ENCODE measurements at regions of chr6 and their contacts with region 1.

Region 1: DNA sequence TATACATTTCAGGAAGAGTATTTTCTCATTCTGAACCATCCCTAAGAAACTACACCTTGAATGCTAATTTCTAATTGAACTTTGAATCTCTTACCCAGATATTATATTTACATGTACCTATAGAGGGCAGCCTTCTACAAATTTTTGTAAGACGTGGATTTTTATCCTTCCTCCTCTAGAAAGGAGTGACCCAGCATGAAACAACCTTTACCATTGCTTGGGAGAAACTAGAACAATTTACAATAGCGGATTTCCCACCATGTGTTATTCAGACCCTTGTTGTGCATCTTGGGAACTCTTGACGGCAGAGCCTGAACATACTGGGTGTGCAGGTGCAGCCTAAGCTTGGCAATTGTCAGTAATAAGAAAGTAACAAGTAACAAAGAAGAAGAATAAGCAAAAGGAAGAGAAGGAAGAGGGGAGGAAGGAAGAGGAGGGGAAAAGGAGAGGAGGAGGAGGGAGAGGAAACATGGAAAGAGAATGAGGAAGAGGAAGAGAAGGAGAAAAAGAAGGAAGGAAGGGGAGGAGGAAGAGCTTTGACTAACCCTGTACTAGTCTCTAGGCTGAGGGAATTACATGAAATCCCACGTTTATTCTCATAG is 10.8 kb upstream of the TAAR1 start:
- DNase-seq: peak; percentile 61
- ATAC-seq: peak; percentile 60
- H3K4me3 ChIP-seq: no peak overlapping the region
- H3K4me3 Mint-ChIP-seq: peak overlapping the region; percentile 44
- H3K27ac ChIP-seq: no peak overlapping the region
- H3K27ac Mint-ChIP-seq: peak overlapping the region; percentile 0
- H3K4me1 ChIP-seq: peaks cover 4 to 5% of the 10 kb centered on the region in 2 donors
- H3K4me1 Mint-ChIP-seq: peaks cover 6% of the 10 kb centered on the region
- H3K27me3 ChIP-seq: no peaks in the 10 kb centered on the region
- H3K27me3 Mint-ChIP-seq: no peaks in the 10 kb centered on the region
- CTCF ChIP-seq: peak; percentile 79

Region 2: GRCh38 chr6:132768051-132768517 is 98.3 kb after region 1 on chr6:
- CTCF ChIA-PET with region 1: interaction called, 144 read pairs
- POLR2A ChIA-PET with region 1: no interaction called
- intact Hi-C with region 1: loop called (anchors 1 kb)
- DNase-seq: peak; percentile 60
- ATAC-seq: peak; percentile 79
- H3K4me3 ChIP-seq: no peak overlapping the region
- H3K4me3 Mint-ChIP-seq: peak overlapping the region; percentile 27
- H3K27ac ChIP-seq: no peak overlapping the region
- H3K27ac Mint-ChIP-seq: peak overlapping the region; percentile 38
- H3K4me1 ChIP-seq: peaks cover 7 to 14% of the 10 kb centered on the region in 2 donors
- H3K4me1 Mint-ChIP-seq: peaks cover 22% of the 10 kb centered on the region
- H3K27me3 ChIP-seq: no peaks in the 10 kb centered on the region
- H3K27me3 Mint-ChIP-seq: no peaks in the 10 kb centered on the region
- CTCF ChIP-seq: peak; percentile 63

Region 3: DNA sequence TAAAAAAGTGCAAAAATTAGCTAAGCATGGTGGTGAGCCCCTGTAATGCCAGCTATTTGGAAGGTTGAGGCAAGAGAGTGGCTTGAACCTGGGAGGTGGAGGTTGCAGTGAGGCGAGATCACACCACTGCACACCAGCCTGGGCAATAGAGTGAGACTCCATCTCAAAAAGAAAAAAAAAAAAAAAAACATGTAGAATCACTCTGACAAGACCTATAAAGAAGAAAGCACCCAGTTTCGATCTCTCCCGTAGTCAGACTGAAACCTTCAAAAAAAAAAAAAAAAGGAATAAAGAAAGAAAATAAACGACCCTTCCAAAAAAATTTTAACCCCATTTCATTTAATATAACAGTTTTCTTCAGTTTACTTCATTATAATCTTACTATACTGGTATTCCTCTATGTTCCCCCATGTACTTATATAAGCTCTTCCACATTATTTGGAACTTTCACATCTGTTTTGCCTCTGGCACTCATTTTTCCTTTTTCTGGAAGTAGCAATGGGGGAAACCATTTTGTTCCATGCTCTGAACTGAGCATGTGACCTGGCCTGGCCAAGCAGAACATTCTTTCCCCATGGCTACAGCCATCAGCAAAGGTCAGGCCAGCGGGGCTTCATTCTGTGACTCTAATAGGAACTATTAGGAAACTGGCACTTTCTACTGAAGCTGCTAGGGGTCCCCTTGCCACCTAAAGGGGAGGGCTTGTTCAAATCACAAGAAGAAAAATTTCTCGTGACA is 119.0 kb after region 1 on chr6:
- CTCF ChIA-PET with region 1: interaction called, 17 read pairs
- POLR2A ChIA-PET with region 1: no interaction called
- intact Hi-C with region 1: no loop called
- DNase-seq: no peak
- ATAC-seq: no peak
- H3K4me3 ChIP-seq: no peak overlapping the region
- H3K4me3 Mint-ChIP-seq: no peak overlapping the region
- H3K27ac ChIP-seq: no peak overlapping the region
- H3K27ac Mint-ChIP-seq: no peak overlapping the region
- H3K4me1 ChIP-seq: no peaks in the 10 kb centered on the region
- H3K4me1 Mint-ChIP-seq: no peaks in the 10 kb centered on the region
- H3K27me3 ChIP-seq: no peaks in the 10 kb centered on the region
- H3K27me3 Mint-ChIP-seq: no peaks in the 10 kb centered on the region
- CTCF ChIP-seq: no peak

Region 4: DNA sequence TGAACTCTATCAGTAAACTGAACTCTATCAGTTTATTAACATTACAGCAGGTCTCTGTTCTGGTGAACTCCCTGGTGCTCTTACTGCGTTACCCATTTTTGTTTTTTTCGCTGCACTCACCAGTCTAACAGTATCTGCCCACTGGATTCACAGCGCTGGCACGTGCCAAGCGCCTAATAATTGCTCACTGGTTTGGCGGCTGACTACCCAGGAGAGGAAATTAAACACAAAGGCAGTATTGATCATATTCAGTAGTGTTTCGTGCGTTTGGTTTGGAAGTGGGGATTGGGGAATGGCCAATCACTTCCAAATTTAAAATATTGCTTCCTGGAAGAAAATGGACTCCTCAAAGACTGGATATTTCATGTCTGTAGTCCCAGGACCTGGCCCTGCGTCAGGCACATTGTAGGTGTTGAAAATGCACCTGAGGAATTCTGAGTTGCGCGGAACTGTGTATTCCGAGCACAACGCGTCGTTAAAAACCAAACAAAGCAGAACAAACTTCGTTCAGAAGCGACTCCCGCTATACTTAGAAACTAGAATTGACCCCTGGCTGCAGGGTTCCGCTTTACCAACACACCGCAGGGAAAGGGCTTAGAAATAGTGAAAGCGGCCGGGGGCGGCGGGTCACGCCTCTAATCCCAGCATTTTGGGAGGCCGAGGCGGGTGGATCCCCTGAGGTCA is 143.5 kb after region 1 on chr6:
- CTCF ChIA-PET with region 1: interaction called, 6 read pairs
- POLR2A ChIA-PET with region 1: interaction called, 3 read pairs
- intact Hi-C with region 1: loop called (anchors 5 kb)
- DNase-seq: peak; percentile 75
- ATAC-seq: peak; percentile 18
- H3K4me3 ChIP-seq: peak overlapping the region; percentile 72 to 100 (median 83)
- H3K4me3 Mint-ChIP-seq: peak overlapping the region; percentile 98
- H3K27ac ChIP-seq: peak overlapping the region; percentile 65 to 82
- H3K27ac Mint-ChIP-seq: peak overlapping the region; percentile 98
- H3K4me1 ChIP-seq: peaks cover 25% of the 10 kb centered on the region in 2 donors
- H3K4me1 Mint-ChIP-seq: peaks cover 47% of the 10 kb centered on the region
- H3K27me3 ChIP-seq: no peaks in the 10 kb centered on the region
- H3K27me3 Mint-ChIP-seq: no peaks in the 10 kb centered on the region
- CTCF ChIP-seq: no peak

Region 5: DNA sequence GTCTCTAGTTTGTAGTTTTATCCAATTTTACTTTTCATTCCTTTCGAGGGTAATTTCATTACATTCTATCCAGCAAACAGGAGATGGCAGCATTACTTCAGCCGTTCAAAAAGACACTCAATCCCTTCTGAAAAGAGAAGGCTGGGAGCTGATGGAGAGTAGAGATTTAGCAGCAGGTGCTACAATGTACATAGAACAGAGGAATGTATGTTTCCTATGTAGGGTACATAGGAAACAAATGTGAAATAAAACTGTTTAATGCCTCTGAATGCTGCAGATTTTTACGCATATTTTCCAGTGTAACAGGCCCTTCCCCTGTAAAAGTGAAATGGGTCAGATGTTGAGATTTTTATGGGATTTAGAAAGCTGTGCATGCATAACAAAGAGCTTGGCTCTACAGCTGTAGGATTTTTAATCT is 160.6 kb after region 1 on chr6:
- CTCF ChIA-PET with region 1: interaction called, 25 read pairs
- POLR2A ChIA-PET with region 1: no interaction called
- intact Hi-C with region 1: no loop called
- DNase-seq: no peak
- ATAC-seq: no peak
- H3K4me3 ChIP-seq: no peak overlapping the region
- H3K4me3 Mint-ChIP-seq: no peak overlapping the region
- H3K27ac ChIP-seq: no peak overlapping the region
- H3K27ac Mint-ChIP-seq: no peak overlapping the region
- H3K4me1 ChIP-seq: no peaks in the 10 kb centered on the region
- H3K4me1 Mint-ChIP-seq: no peaks in the 10 kb centered on the region
- H3K27me3 ChIP-seq: no peaks in the 10 kb centered on the region
- H3K27me3 Mint-ChIP-seq: peaks cover under 1% of the 10 kb centered on the region
- CTCF ChIP-seq: no peak

Region 6: GRCh38 chr6:132929141-132929540 is 259.4 kb after region 1 on chr6:
- CTCF ChIA-PET with region 1: no interaction called
- POLR2A ChIA-PET with region 1: no interaction called
- intact Hi-C with region 1: no loop called
- DNase-seq: no peak
- ATAC-seq: no peak
- H3K4me3 ChIP-seq: no peak overlapping the region
- H3K4me3 Mint-ChIP-seq: no peak overlapping the region
- H3K27ac ChIP-seq: no peak overlapping the region
- H3K27ac Mint-ChIP-seq: no peak overlapping the region
- H3K4me1 ChIP-seq: no peaks in the 10 kb centered on the region
- H3K4me1 Mint-ChIP-seq: no peaks in the 10 kb centered on the region
- H3K27me3 ChIP-seq: peaks cover 0 to 4% (median 0%) of the 10 kb centered on the region in 4 experiments
- H3K27me3 Mint-ChIP-seq: peaks cover 33% of the 10 kb centered on the region
- CTCF ChIP-seq: no peak

Region 7: DNA sequence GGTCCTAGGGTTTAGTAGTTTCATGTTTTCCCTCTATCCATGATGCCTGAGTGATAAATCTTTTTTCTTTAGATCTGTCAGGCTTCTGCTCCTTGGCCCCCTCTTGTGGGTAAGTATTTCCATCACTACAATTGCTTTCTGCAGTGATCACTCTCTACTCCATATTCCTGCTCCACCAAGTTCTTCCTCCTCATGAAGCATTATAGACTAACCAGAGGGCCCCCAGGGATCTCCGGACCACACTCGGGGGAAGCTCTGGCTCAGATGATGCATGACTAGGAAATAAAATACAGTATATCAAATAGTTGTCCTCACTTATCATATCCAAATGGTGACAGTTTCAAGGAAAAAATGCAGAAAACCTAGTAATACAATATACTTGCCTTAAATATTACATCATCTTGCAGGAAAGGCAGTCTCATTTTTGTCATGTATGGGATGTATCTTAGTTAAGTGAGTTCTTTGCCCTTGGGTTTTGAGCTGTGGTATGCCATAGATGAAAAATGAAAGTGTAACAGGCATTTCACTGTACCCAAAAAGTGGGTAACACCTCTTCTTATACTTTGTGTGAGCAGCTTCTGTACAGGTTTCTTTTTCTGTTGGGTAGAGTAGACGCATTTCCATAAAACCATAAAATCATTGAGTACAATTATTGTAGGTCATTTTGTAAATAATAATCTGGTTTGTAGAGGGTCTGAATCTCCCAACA is 370.5 kb after region 1 on chr6:
- CTCF ChIA-PET with region 1: interaction called, 4 read pairs
- POLR2A ChIA-PET with region 1: no interaction called
- intact Hi-C with region 1: loop called (anchors 5 kb)
- DNase-seq: peak; percentile 4
- ATAC-seq: no peak
- H3K4me3 ChIP-seq: no peak overlapping the region
- H3K4me3 Mint-ChIP-seq: no peak overlapping the region
- H3K27ac ChIP-seq: no peak overlapping the region
- H3K27ac Mint-ChIP-seq: no peak overlapping the region
- H3K4me1 ChIP-seq: no peaks in the 10 kb centered on the region
- H3K4me1 Mint-ChIP-seq: no peaks in the 10 kb centered on the region
- H3K27me3 ChIP-seq: no peaks in the 10 kb centered on the region
- H3K27me3 Mint-ChIP-seq: peaks cover 6% of the 10 kb centered on the region
- CTCF ChIP-seq: peak; percentile 36

Measured in B cell (primary cell).